Sigmoid colon (tissue), 7 donors: ENCODE measurements at regions of chr14 and their contacts with region 1.

Region 1: DNA sequence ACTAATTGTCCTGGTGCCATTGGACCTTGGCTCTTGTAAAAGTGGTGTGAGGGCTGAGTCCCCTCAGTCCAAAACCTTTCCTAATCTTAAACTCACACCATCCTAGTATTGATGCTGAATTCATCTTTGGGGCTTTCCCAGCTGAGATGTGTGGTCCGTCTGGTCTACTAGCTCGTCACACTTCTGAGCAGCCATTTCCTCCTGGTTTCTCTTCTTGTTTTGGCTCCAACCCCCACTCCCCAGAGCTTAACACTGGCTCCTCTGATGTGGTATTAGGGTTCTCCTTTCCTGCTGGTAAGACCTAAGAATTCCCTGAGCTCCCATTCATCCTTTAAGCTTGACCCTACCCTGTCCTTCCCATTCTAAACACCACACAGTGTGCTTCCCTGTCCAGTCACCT is 900.6 kb downstream of the VRK1 start:
- DNase-seq: no peak
- H3K4me3 ChIP-seq: no peak overlapping the region
- H3K27ac ChIP-seq: no peak overlapping the region
- H3K4me1 ChIP-seq: no peaks in the 10 kb centered on the region
- H3K27me3 ChIP-seq: no peaks in the 10 kb centered on the region
- CTCF ChIP-seq: no peak
- EP300 ChIP-seq: no peak
- POLR2A ChIP-seq: no peak

Region 2: DNA sequence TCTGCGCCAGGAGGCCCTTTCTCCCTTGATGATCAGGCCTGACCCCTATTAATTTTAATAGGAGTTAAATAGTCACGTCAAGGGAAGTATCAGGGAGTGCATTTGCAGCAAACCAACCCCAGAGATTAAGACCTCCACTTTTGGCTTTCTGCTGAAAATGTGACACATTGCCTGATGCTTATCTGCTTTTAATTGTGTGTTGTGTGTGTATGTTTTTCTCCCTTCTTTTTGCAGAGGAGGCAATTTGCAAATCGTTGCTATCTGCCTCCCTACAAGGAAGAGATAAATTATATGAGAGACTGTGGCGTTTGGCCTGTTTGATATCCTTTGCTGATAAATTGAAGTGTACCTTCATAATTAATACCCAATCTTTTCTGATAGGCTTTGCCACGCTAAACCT is 77.7 kb before region 1 on chr14:
- intact Hi-C with region 1: no loop called
- DNase-seq: no peak
- H3K4me3 ChIP-seq: no peak overlapping the region
- H3K27ac ChIP-seq: no peak overlapping the region
- H3K4me1 ChIP-seq: no peaks in the 10 kb centered on the region
- H3K27me3 ChIP-seq: no peaks in the 10 kb centered on the region
- CTCF ChIP-seq: no peak
- EP300 ChIP-seq: no peak
- POLR2A ChIP-seq: no peak

Region 3: GRCh38 chr14:97713023-97713422 is 15.3 kb after region 1 on chr14:
- intact Hi-C with region 1: loop called (anchors 2 kb)
- DNase-seq: no peak
- H3K4me3 ChIP-seq: no peak overlapping the region
- H3K27ac ChIP-seq: no peak overlapping the region
- H3K4me1 ChIP-seq: no peaks in the 10 kb centered on the region
- H3K27me3 ChIP-seq: no peaks in the 10 kb centered on the region
- CTCF ChIP-seq: no peak
- EP300 ChIP-seq: no peak
- POLR2A ChIP-seq: no peak